Naive thymus-derived CD4-positive, alpha-beta T cell (primary cell): ENCODE measurements at regions of chr6 and their contacts with region 1.

Region 1: DNA sequence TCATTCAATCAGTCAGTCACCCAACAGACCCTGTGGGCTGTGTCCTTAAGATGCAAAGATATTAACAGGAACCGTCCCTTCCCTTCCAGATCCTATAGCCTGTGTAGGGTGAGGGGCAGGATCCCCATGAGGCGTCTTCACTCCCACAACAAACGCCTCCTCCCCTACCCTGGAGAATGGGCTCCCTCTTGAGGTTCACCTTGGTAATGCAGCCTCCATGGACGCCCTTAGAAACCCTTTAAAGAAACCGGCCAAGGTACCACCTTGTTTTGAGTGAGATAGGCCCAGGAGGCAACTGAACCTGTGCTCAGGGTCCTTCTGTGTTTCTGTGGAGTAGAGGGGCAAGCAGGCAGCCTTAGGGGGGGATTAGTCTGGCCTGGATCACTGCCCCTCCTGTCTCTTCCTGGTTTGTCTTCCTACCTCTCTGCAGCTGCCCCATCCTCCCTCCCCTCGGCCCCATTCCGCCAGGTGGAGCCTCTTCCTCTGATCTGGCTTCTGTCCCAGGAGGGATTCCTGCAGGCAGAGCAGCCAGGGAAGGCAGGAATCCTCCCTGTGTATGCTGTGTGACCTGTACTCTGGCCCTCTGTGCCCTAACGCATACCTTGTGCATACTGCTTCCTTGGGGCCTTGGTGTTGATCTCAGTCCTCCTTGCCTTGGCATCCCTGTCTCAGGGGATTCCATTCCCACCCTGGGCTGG is 6.6 kb upstream of the GUCA1A start:
- DNase-seq: peak; percentile 48 to 83 (median 71)
- ATAC-seq: peak; percentile 95
- H3K4me3 ChIP-seq: no peak overlapping the region
- H3K4me3 Mint-ChIP-seq: no peak overlapping the region
- H3K27ac ChIP-seq: no peak overlapping the region
- H3K27ac Mint-ChIP-seq: peak overlapping the region in 2 of 9 donors; percentile 10 to 51
- H3K4me1 ChIP-seq: no peaks in the 10 kb centered on the region
- H3K4me1 Mint-ChIP-seq: peaks cover 0 to 10% (median 5%) of the 10 kb centered on the region in 7 donors
- H3K27me3 ChIP-seq: no peaks in the 10 kb centered on the region
- H3K27me3 Mint-ChIP-seq: peaks cover 0 to 6% (median 3%) of the 10 kb centered on the region in 5 donors

Region 2: GRCh38 chr6:41602864-41603608 is 563.6 kb before region 1 on chr6:
- CTCF ChIA-PET with region 1: no interaction called
- POLR2A ChIA-PET with region 1: no interaction called
- intact Hi-C with region 1: loop called (anchors 2 to 10 kb)
- DNase-seq: peak; percentile 49 to 78 (median 68)
- ATAC-seq: peak; percentile 86
- H3K4me3 ChIP-seq: no peak overlapping the region
- H3K4me3 Mint-ChIP-seq: peak overlapping the region in 6 of 10 donors; percentile 24 to 56 (median 34)
- H3K27ac ChIP-seq: no peak overlapping the region
- H3K27ac Mint-ChIP-seq: no peak overlapping the region
- H3K4me1 ChIP-seq: peaks cover 4 to 7% of the 10 kb centered on the region in 2 donors
- H3K4me1 Mint-ChIP-seq: peaks cover 4 to 7% (median 5%) of the 10 kb centered on the region in 7 donors
- H3K27me3 ChIP-seq: no peaks in the 10 kb centered on the region
- H3K27me3 Mint-ChIP-seq: peaks cover 0 to 7% (median 0%) of the 10 kb centered on the region in 5 donors

Region 3: DNA sequence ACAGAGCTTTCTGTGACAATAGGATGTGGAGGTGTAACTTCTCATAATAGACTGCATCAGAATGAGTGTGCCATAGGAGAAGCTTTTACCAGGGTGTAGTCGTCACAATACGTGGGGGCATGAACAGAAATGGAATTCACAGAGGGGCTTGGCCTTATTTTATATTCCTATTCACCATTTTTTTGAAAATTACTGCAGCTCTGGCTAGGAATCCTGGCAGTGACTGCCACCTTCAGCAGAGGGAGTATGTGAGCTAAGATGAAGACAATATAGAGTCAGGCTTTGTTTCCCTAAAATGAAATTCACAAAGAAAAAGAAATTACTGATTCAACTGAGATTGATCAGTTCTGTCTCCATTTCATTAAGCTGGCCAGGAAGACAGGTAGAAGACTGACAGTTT is 365.2 kb before region 1 on chr6:
- CTCF ChIA-PET with region 1: interaction called, 3 read pairs
- POLR2A ChIA-PET with region 1: no interaction called
- intact Hi-C with region 1: loop called (anchors 2 to 5 kb)
- DNase-seq: no peak
- ATAC-seq: no peak
- H3K4me3 ChIP-seq: no peak overlapping the region
- H3K4me3 Mint-ChIP-seq: no peak overlapping the region
- H3K27ac ChIP-seq: no peak overlapping the region
- H3K27ac Mint-ChIP-seq: no peak overlapping the region
- H3K4me1 ChIP-seq: no peaks in the 10 kb centered on the region
- H3K4me1 Mint-ChIP-seq: peaks cover 0 to 4% (median 0%) of the 10 kb centered on the region in 7 donors
- H3K27me3 ChIP-seq: no peaks in the 10 kb centered on the region
- H3K27me3 Mint-ChIP-seq: no peaks in the 10 kb centered on the region

Region 4: DNA sequence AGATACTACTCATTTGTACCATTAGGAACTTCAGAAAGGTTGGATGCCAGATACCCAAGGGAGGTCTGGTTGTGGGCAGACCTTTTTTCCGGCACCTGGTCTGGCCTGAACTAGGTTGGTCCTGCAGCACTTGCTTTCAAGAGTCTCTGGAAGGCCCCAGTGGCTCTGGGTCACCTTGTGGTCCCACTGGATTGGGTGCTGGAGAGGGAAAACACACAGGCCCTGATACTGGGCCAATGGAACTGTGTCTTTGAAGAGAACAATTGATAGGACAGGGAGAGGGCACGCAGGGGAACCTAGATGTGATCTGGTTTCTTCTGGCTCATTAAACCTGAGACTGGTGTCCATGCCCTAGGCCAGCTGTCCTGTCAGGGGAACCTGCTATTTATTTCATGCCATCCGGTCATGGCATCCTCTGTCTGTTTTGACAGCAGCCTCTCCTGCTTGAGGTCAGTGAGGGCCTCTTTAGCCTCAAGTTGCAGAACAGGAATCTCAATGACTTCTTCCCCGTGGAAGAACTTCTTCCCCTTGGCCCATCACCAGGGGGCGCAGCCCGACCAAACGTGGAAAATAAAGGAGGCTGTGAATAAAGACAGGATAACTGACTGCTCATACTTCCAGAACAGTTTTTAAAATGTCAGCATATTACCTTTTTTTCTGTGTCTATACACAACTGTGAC is 91.3 kb before region 1 on chr6:
- CTCF ChIA-PET with region 1: no interaction called
- POLR2A ChIA-PET with region 1: no interaction called
- intact Hi-C with region 1: loop called (anchors 1 kb)
- DNase-seq: peak in 8 of 9 donors; percentile 30 to 69 (median 36)
- ATAC-seq: no peak
- H3K4me3 ChIP-seq: no peak overlapping the region
- H3K4me3 Mint-ChIP-seq: no peak overlapping the region
- H3K27ac ChIP-seq: no peak overlapping the region
- H3K27ac Mint-ChIP-seq: peak overlapping the region in 6 of 9 donors; percentile 17 to 69 (median 52)
- H3K4me1 ChIP-seq: no peaks in the 10 kb centered on the region
- H3K4me1 Mint-ChIP-seq: peaks cover 0 to 12% (median 4%) of the 10 kb centered on the region in 7 donors
- H3K27me3 ChIP-seq: no peaks in the 10 kb centered on the region
- H3K27me3 Mint-ChIP-seq: no peaks in the 10 kb centered on the region

Region 5: DNA sequence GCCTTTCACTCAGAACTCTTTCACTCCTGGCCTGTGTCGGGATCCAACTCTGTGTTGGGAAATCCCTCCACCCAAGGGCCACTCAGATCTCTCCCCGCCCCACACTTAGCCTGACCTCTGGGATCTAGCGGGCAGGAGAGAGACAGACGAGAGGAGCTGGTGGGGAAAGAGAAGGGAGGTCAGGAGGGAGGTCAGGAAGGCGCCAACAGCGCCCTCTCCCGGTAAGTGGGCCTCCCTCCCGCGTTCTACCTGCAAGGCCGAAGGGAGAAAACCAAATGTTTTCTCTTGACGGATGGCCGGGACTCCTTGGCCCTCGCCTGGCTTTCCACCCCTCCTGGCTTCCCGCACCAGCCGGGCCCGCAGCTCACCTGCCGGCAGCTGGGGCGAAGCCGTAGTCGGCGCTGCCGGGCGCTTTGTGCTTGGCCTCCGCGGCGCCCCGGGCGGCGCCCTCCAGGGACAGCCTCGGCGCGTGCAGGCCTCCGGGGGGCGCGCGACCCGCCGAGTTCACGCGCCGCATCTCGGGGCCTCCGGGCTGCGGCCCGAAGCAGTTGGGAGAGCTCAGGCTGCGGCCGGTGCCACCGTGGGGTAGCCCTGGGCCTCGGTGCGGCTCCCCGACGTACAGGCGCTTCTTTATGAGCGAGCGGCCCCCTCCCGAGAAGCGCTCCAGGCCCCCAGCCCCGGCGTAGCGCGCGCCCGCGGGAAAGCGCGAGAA is 62.3 kb before region 1 on chr6:
- CTCF ChIA-PET with region 1: interaction called, 4 read pairs
- POLR2A ChIA-PET with region 1: no interaction called
- intact Hi-C with region 1: loop called in 1 of 2 experiments (anchors 1 kb)
- DNase-seq: peak; percentile 39 to 79 (median 73)
- ATAC-seq: peak; percentile 90
- H3K4me3 ChIP-seq: peak overlapping the region; percentile 68
- H3K4me3 Mint-ChIP-seq: peak overlapping the region; percentile 66 to 89 (median 70)
- H3K27ac ChIP-seq: peak overlapping the region; percentile 41
- H3K27ac Mint-ChIP-seq: peak overlapping the region in 5 of 9 donors; percentile 20 to 78 (median 58)
- H3K4me1 ChIP-seq: peaks cover 0 to 4% of the 10 kb centered on the region in 2 donors
- H3K4me1 Mint-ChIP-seq: peaks cover 0 to 28% (median 9%) of the 10 kb centered on the region in 7 donors
- H3K27me3 ChIP-seq: no peaks in the 10 kb centered on the region
- H3K27me3 Mint-ChIP-seq: no peaks in the 10 kb centered on the region